Dendritic cell treated with granulocyte-macrophage colony-stimulating factor and Interleukin-4, amounts not matched to agents 40 ng/mL and 50 ng/mL, for 4 days (primary cell): ENCODE measurements at regions of chr16 and their contacts with region 1.

Region 1: GRCh38 chr16:12095275-12096156 is 119.0 kb downstream of the SNX29 start:
- H3K4me3 Mint-ChIP-seq: no peak overlapping the region
- H3K27ac Mint-ChIP-seq: no peak overlapping the region
- H3K4me1 Mint-ChIP-seq: peaks cover 21% of the 10 kb centered on the region
- H3K27me3 Mint-ChIP-seq: no peaks in the 10 kb centered on the region

Region 2: DNA sequence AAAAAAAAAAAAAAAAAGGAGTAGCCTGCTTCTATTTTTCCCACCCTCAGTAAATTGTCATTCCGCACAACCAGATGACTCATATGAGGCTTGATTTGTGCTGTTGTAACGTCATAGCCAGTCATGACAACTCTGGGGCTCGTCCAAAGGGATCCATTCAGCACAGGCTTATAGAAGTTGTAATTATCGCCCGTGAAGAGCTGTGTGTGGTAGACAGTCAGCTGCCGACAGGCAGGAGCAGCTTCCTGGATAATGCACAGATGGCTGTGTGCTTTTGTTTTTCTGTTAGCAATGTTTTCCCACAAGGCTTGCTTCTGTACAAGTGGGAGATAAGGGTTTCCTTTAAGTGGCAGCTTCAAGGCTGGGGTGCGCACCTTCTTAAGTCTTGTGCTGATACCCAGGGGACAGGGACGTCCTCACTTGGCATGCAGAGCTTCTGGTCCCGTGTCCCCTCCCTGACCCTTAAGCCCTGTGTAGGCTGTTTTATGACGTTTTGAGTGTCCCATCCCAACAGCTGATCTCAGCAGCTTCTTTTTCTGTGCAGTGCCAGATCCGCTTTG is 93.0 kb before region 1 on chr16:
- intact Hi-C with region 1: no loop called
- H3K4me3 Mint-ChIP-seq: no peak overlapping the region
- H3K27ac Mint-ChIP-seq: no peak overlapping the region
- H3K4me1 Mint-ChIP-seq: peaks cover 36% of the 10 kb centered on the region
- H3K27me3 Mint-ChIP-seq: no peaks in the 10 kb centered on the region

Region 3: GRCh38 chr16:13453938-13454553 is 1358.5 kb after region 1 on chr16:
- intact Hi-C with region 1: loop called (anchors 5 kb)
- H3K4me3 Mint-ChIP-seq: no peak overlapping the region
- H3K27ac Mint-ChIP-seq: no peak overlapping the region
- H3K4me1 Mint-ChIP-seq: no peaks in the 10 kb centered on the region
- H3K27me3 Mint-ChIP-seq: no peaks in the 10 kb centered on the region